ENCODE measurements at regions of chr6 and their contacts with region 1.

Region 1: GRCh38 chr6:160455541-160456213 is 107.5 kb downstream of the SLC22A3 start:
- DNase-seq: peak; percentile 33 to 76 (median 45)
- ATAC-seq: peak; percentile 69 to 90 (median 86)
- H3K4me3 ChIP-seq: peak overlapping the region in 8 of 12 donors; percentile 11 to 41 (median 23)
- H3K27ac ChIP-seq: peak overlapping the region; percentile 4 to 68 (median 31)
- H3K4me1 ChIP-seq: peaks cover 0 to 23% (median 1%) of the 10 kb centered on the region in 12 donors
- H3K27me3 ChIP-seq: peaks cover 0 to 8% (median 0%) of the 10 kb centered on the region in 9 donors
- CTCF ChIP-seq: peak; percentile 86 to 99 (median 97)
- POLR2A ChIP-seq: no peak

Region 2: DNA sequence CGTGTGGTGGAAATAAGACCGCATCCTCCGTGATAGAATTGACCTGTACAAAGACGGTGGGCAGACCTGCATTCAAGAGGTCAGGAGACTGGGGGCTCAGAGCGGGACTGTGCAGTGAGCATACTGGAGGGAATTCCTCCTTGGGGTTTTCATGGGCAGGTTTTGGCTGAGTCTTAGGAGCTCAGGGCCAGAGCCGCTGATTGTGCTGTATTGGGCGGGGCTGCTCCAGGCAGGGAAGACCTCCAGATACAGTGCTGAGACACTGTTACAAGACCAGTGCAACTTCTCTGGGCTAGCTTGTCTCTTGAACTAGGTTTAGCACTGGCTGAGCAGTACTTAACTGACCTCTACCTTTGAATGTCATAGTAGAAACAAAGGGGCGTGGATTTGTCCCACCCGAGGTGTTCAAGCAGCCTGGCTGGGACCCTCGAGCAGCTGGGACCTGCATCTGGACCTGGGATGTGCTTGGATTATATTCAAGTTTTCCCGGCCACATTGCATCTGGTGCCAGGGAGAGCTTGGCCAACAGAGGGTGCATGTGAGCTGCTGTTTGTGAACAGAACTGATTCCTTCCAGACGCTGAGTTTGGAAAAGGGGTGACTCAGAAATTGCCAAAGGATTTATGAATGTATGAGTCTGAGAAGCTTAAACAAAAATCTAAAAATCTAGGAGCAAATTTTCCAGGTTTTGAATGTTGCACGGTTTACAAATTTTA is 367.5 kb before region 1 on chr6:
- intact Hi-C with region 1: loop called in 7 of 10 experiments (anchors 1 to 5 kb)
- DNase-seq: peak in 4 of 5 donors; percentile 40 to 68 (median 51)
- ATAC-seq: peak; percentile 40 to 81 (median 52)
- H3K4me3 ChIP-seq: no peak overlapping the region
- H3K27ac ChIP-seq: peak overlapping the region in 1 of 12 donors; percentile 28
- H3K4me1 ChIP-seq: peaks cover 0 to 6% (median 0%) of the 10 kb centered on the region in 12 donors
- H3K27me3 ChIP-seq: no peaks in the 10 kb centered on the region
- CTCF ChIP-seq: peak; percentile 36 to 73 (median 56)
- POLR2A ChIP-seq: no peak

Region 3: GRCh38 chr6:160095146-160095845 is 360.4 kb before region 1 on chr6:
- intact Hi-C with region 1: loop called in 1 of 10 experiments (anchors 5 kb)
- DNase-seq: no peak
- ATAC-seq: no peak
- H3K4me3 ChIP-seq: no peak overlapping the region
- H3K27ac ChIP-seq: no peak overlapping the region
- H3K4me1 ChIP-seq: peaks cover 0 to 11% (median 0%) of the 10 kb centered on the region in 12 donors
- H3K27me3 ChIP-seq: no peaks in the 10 kb centered on the region
- CTCF ChIP-seq: no peak
- POLR2A ChIP-seq: no peak

Region 4: DNA sequence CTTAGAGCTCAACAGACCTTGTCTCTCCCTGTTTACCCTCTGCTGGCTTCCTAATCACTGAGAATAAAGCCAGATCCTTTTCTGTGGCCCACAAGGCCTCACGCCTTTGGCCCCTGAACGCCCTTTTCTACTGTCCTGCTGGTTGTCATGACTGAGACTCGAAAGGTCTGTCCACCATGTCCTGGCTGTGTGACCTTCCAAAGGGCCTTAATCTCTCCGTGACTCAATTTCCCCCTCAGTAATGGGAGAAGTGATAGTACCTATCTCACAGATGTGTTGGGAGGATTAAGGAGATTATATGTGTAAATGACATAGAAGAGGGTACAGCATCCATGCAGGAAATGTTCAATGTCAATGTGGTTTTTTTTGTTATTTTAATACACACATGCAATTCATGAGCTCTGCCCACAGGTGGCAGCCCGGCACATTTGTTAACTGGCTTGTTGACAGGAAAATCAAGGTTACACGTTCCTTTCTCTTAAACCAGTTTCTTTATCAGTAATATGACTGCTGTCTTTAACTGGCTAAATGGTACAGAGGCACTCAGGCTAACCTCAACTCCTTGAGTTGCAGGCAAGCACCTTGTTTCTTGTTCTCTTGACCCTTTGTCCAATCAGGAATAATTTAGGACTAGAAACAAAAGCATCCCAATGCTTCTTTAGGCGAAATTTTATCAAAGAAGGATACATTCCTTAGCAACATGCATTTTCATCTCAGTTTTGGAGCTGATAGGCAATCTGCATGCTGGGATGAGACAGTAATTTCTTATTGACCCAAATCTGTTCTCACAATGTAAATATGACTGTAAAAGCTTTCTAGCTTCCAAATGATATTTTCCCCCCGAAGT is 317.5 kb before region 1 on chr6:
- intact Hi-C with region 1: loop called (anchors 1 to 5 kb)
- DNase-seq: peak in 1 of 5 donors; percentile 55
- ATAC-seq: peak; percentile 26 to 73 (median 46)
- H3K4me3 ChIP-seq: no peak overlapping the region
- H3K27ac ChIP-seq: no peak overlapping the region
- H3K4me1 ChIP-seq: peaks cover 0 to 6% (median 0%) of the 10 kb centered on the region in 12 donors
- H3K27me3 ChIP-seq: no peaks in the 10 kb centered on the region
- CTCF ChIP-seq: peak in 11 of 12 donors; percentile 51 to 83 (median 69)
- POLR2A ChIP-seq: no peak

Region 5: DNA sequence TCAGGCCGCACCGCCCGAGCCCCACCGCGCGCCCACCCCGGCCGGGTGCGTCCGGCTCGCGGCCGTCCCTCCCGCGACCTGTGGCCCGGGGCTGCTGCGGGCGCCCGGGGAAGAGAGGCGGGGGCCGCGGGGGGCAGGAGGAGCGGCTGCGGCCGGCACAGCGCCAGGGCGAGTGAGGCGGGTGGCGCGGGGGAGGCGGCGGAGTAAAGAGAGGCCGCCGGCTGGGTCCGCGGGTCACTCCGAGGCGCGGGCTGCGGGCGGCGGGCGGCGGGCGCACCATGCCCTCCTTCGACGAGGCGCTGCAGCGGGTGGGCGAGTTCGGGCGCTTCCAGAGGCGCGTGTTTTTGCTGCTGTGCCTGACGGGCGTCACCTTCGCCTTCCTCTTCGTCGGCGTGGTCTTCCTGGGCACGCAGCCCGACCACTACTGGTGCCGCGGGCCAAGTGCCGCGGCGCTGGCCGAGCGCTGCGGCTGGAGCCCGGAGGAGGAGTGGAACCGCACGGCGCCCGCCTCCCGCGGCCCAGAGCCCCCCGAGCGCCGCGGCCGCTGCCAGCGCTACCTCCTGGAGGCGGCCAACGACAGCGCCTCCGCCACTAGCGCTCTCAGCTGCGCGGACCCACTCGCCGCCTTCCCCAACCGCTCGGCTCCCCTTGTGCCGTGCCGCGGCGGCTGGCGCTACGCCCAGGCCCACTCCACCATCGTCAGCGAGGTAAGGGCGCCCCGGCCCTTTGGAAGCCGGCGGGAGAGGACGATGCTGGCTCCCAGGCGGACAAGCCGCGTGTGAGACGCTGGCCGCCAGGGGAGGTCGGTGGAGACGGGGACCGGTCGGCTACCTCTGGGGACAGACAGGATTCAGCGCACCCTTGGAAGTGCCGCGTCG is 107.3 kb before region 1 on chr6 and contains the start of gene SLC22A3:
- intact Hi-C with region 1: loop called in 1 of 10 experiments (anchors 10 kb)
- DNase-seq: peak in 2 of 5 donors; percentile 35 to 60
- ATAC-seq: peak in 3 of 4 donors; percentile 44 to 81 (median 53)
- H3K4me3 ChIP-seq: peak within 1 kb of the TSS; percentile 43 to 65 (median 51)
- H3K27ac ChIP-seq: peak within 1 kb of the TSS in 6 of 12 donors; percentile 9 to 87 (median 38)
- H3K4me1 ChIP-seq: peaks cover 0 to 19% (median 0%) of the 10 kb centered on the region in 12 donors
- H3K27me3 ChIP-seq: peaks cover 0 to 46% (median 11%) of the 10 kb centered on the region in 9 donors
- CTCF ChIP-seq: peak in 1 of 12 donors; percentile 9
- POLR2A ChIP-seq: no peak
- total RNA-seq, gene SLC22A3: 0.45 to 3.0 (median 0.75) TPM

Region 6: GRCh38 chr6:160408528-160408927 is 47.1 kb before region 1 on chr6:
- intact Hi-C with region 1: no loop called
- DNase-seq: no peak
- ATAC-seq: no peak
- H3K4me3 ChIP-seq: no peak overlapping the region
- H3K27ac ChIP-seq: no peak overlapping the region
- H3K4me1 ChIP-seq: no peaks in the 10 kb centered on the region
- H3K27me3 ChIP-seq: no peaks in the 10 kb centered on the region
- CTCF ChIP-seq: no peak
- POLR2A ChIP-seq: no peak

Region 7: GRCh38 chr6:160534050-160534696 is 78.5 kb after region 1 on chr6:
- intact Hi-C with region 1: loop called in 6 of 10 experiments (anchors 1 to 2 kb)
- DNase-seq: peak; percentile 31 to 67 (median 34)
- ATAC-seq: peak; percentile 42 to 68 (median 56)
- H3K4me3 ChIP-seq: peak overlapping the region in 5 of 12 donors; percentile 8 to 42 (median 11)
- H3K27ac ChIP-seq: no peak overlapping the region
- H3K4me1 ChIP-seq: peaks cover 0 to 6% (median 0%) of the 10 kb centered on the region in 12 donors
- H3K27me3 ChIP-seq: peaks cover 0 to 4% (median 0%) of the 10 kb centered on the region in 9 donors
- CTCF ChIP-seq: peak; percentile 80 to 96 (median 90)
- POLR2A ChIP-seq: no peak

Measured in heart left ventricle (tissue), 16 donors.